CD8-positive, alpha-beta T cell (primary cell): ENCODE measurements at regions of chr5 and their contacts with region 1.

Region 1: GRCh38 chr5:132736853-132737833 is at the start of gene KIF3A:
- DNase-seq: peak; percentile 94 to 99 (median 99)
- ATAC-seq: peak; percentile 89
- H3K4me3 ChIP-seq: peak within 1 kb of the TSS; percentile 80 to 85
- H3K4me3 Mint-ChIP-seq: peak within 1 kb of the TSS; percentile 94
- H3K27ac ChIP-seq: peak within 1 kb of the TSS; percentile 83
- H3K27ac Mint-ChIP-seq: peak within 1 kb of the TSS; percentile 93
- H3K4me1 ChIP-seq: peaks cover 15% of the 10 kb centered on the region
- H3K4me1 Mint-ChIP-seq: peaks cover 30% of the 10 kb centered on the region
- H3K27me3 ChIP-seq: no peaks in the 10 kb centered on the region
- H3K27me3 Mint-ChIP-seq: no peaks in the 10 kb centered on the region
- CTCF ChIP-seq: peak; percentile 30
- total RNA-seq, gene KIF3A: 13.0 to 14.8 TPM

Region 2: DNA sequence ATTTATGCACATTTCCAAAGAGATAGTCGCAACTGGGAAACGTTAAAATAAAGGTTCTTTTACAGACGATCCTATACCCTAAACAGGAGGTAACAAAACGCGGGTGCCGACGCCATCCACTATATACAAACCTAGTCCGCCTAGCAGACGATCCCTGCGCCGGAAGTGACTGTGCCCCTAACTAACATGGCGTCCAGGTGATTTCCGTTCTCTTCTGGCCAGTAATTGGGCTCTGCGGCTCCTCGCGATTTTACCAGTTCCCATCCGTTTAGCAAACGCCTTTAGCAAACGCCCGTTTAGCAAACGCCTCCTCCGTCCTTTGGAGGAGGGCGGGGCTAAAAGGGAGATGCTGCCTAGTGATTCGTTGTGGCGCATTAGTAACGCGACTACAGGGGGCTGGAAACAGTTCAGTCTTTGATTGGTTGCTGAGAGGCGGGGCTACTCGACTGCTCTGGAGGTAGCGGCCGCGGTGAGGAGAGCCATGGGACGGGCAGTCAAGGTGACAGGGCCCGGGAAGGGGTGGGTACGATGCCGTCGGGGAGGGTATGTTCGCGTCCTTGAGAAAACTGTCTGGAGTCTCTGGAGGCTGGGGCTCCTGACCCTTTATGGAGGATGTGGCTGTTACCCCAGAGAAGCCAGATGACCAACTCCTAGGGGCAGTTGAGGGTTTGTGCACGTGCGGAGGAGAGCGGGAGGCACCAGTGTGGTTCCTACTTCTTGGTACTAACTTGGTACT is 1566.4 kb before region 1 on chr5 and contains the start of gene LYRM7:
- CTCF ChIA-PET with region 1: no interaction called
- POLR2A ChIA-PET with region 1: no interaction called
- intact Hi-C with region 1: loop called in 1 of 2 experiments (anchors 5 kb)
- DNase-seq: peak; percentile 89 to 99 (median 93)
- ATAC-seq: peak; percentile 95
- H3K4me3 ChIP-seq: peak within 1 kb of the TSS; percentile 64 to 76
- H3K4me3 Mint-ChIP-seq: peak within 1 kb of the TSS; percentile 100
- H3K27ac ChIP-seq: peak within 1 kb of the TSS; percentile 73 to 81
- H3K27ac Mint-ChIP-seq: peak within 1 kb of the TSS; percentile 99
- H3K4me1 ChIP-seq: peaks cover 22% of the 10 kb centered on the region
- H3K4me1 Mint-ChIP-seq: peaks cover 45% of the 10 kb centered on the region
- H3K27me3 ChIP-seq: no peaks in the 10 kb centered on the region
- H3K27me3 Mint-ChIP-seq: no peaks in the 10 kb centered on the region
- CTCF ChIP-seq: no peak
- total RNA-seq, gene LYRM7: 8.7 to 8.9 TPM

Region 3: DNA sequence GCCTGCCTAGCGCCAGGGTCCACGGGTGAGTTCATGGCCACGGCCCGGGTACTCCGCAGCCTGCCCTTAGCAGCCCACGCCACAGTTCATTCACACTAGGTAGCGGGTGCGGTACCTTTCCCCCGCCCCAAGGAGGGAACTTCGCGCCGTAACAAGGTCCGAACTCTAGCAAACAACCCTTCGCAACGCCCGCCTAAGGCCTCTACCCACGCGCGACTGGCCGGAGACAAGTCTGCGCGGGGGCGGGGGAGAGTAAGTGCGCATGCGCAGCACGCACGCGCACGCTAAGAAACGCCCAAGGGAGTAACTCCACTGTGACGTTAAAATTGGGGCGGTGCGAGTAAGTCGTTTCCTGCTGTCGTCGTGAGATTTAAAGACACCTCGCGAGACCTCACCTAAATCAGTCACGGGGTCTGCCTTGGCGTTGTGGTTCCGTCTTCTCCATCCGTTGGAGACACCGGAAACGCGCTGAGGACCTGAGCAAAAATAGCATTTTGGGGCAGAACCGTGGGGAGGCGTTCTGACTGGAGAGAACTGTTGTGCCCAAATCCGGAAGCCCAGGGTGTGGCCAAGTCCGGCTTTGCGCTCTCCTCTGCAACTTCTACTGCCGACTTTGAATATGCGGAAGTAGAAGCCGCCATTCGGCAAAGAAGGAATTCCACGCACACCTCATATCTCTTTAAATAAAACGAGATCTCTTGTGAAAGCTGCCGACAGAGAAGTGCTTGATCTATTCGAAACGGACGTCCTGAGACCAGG is 1102.0 kb before region 1 on chr5 and contains the start of gene RAPGEF6:
- CTCF ChIA-PET with region 1: no interaction called
- POLR2A ChIA-PET with region 1: no interaction called
- intact Hi-C with region 1: loop called in 1 of 2 experiments (anchors 5 kb)
- DNase-seq: peak; percentile 91 to 100 (median 95)
- ATAC-seq: peak; percentile 83
- H3K4me3 ChIP-seq: peak within 1 kb of the TSS; percentile 83
- H3K4me3 Mint-ChIP-seq: peak within 1 kb of the TSS; percentile 96
- H3K27ac ChIP-seq: peak within 1 kb of the TSS; percentile 94 to 98
- H3K27ac Mint-ChIP-seq: peak within 1 kb of the TSS; percentile 99
- H3K4me1 ChIP-seq: peaks cover 61% of the 10 kb centered on the region
- H3K4me1 Mint-ChIP-seq: peaks cover 34% of the 10 kb centered on the region
- H3K27me3 ChIP-seq: no peaks in the 10 kb centered on the region
- H3K27me3 Mint-ChIP-seq: no peaks in the 10 kb centered on the region
- CTCF ChIP-seq: no peak
- total RNA-seq, gene RAPGEF6: 64.3 to 71.7 TPM

Region 4: GRCh38 chr5:132556763-132557477 is 180.2 kb before region 1 on chr5 and contains the start of gene RAD50:
- CTCF ChIA-PET with region 1: no interaction called
- POLR2A ChIA-PET with region 1: interaction called, 4 read pairs
- intact Hi-C with region 1: loop called (anchors 2 to 5 kb)
- DNase-seq: peak; percentile 83 to 96 (median 91)
- ATAC-seq: peak; percentile 95
- H3K4me3 ChIP-seq: peak within 1 kb of the TSS; percentile 62 to 97
- H3K4me3 Mint-ChIP-seq: peak within 1 kb of the TSS; percentile 98
- H3K27ac ChIP-seq: peak within 1 kb of the TSS; percentile 68 to 91
- H3K27ac Mint-ChIP-seq: peak within 1 kb of the TSS; percentile 98
- H3K4me1 ChIP-seq: peaks cover 21% of the 10 kb centered on the region
- H3K4me1 Mint-ChIP-seq: peaks cover 28% of the 10 kb centered on the region
- H3K27me3 ChIP-seq: no peaks in the 10 kb centered on the region
- H3K27me3 Mint-ChIP-seq: no peaks in the 10 kb centered on the region
- CTCF ChIP-seq: no peak
- total RNA-seq, gene RAD50: 8.0 to 8.7 TPM

Region 5: DNA sequence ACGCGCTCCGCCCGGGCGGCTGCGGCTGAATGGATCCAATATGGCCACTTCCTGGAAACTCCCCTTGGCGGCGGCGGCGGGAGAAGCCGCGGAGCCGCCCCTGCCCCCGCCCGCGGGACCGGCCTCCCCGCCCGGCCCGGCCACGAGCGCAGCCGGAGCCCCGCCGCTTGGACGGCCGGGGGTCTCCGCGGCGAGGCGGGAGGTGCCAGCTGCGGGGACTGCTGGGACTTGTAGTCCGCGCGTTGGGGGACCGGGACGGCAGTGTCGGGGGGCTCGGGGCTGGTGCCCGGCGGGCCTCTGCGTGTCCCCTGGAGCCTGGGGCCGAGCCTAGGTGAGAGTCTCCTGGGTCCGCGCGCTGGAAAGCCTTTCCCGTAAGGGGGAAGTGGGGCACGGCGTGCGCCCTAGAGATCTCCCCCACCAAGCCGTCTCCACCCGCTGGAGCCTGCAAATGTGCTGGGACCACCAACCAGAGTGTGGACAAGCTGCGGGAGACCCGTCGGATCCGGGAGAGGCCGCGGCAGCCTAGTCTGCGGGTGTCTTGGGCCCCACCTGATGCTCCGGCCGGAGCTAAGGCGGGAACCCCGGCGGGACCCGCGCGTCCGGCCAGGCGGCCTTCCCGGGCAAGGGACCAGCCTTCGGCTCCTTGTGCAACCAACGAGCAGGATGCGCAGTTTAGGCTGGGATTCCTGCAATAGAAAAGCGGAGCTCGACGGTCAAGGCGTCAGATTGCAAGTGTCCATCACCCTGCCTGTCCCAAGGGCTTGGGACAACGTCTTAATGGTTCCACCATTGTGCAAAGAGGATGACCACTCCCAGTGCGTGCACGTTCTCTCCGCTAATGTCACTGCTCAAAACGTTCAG is 40.3 kb after region 1 on chr5 and contains the start of gene SEPTIN8:
- CTCF ChIA-PET with region 1: no interaction called
- POLR2A ChIA-PET with region 1: no interaction called
- intact Hi-C with region 1: loop called in 1 of 2 experiments (anchors 1 kb)
- DNase-seq: peak in 8 of 9 experiments; percentile 4 to 69 (median 32)
- ATAC-seq: peak; percentile 66
- H3K4me3 ChIP-seq: peak within 1 kb of the TSS; percentile 62 to 79
- H3K4me3 Mint-ChIP-seq: peak within 1 kb of the TSS; percentile 68
- H3K27ac ChIP-seq: no peak within 1 kb of the TSS
- H3K27ac Mint-ChIP-seq: no peak within 1 kb of the TSS
- H3K4me1 ChIP-seq: peaks cover 20% of the 10 kb centered on the region
- H3K4me1 Mint-ChIP-seq: peaks cover 33% of the 10 kb centered on the region
- H3K27me3 ChIP-seq: peaks cover 0 to 4% of the 10 kb centered on the region in 2 experiments
- H3K27me3 Mint-ChIP-seq: peaks cover 15% of the 10 kb centered on the region
- CTCF ChIP-seq: no peak
- total RNA-seq, gene SEPTIN8: 5.3 to 6.8 TPM

Region 6: GRCh38 chr5:132963175-132964104 is 226.3 kb after region 1 on chr5 and contains the start of gene AFF4:
- CTCF ChIA-PET with region 1: no interaction called
- POLR2A ChIA-PET with region 1: interaction called, 3 read pairs
- intact Hi-C with region 1: loop called in 1 of 2 experiments (anchors 5 kb)
- DNase-seq: peak; percentile 69 to 93 (median 84)
- ATAC-seq: peak; percentile 75
- H3K4me3 ChIP-seq: peak within 1 kb of the TSS; percentile 52 to 71
- H3K4me3 Mint-ChIP-seq: peak within 1 kb of the TSS; percentile 95
- H3K27ac ChIP-seq: peak within 1 kb of the TSS; percentile 84 to 92
- H3K27ac Mint-ChIP-seq: peak within 1 kb of the TSS; percentile 99
- H3K4me1 ChIP-seq: peaks cover 35% of the 10 kb centered on the region
- H3K4me1 Mint-ChIP-seq: peaks cover 43% of the 10 kb centered on the region
- H3K27me3 ChIP-seq: no peaks in the 10 kb centered on the region
- H3K27me3 Mint-ChIP-seq: no peaks in the 10 kb centered on the region
- CTCF ChIP-seq: no peak
- total RNA-seq, gene AFF4: 98.0 to 104 TPM

Region 7: DNA sequence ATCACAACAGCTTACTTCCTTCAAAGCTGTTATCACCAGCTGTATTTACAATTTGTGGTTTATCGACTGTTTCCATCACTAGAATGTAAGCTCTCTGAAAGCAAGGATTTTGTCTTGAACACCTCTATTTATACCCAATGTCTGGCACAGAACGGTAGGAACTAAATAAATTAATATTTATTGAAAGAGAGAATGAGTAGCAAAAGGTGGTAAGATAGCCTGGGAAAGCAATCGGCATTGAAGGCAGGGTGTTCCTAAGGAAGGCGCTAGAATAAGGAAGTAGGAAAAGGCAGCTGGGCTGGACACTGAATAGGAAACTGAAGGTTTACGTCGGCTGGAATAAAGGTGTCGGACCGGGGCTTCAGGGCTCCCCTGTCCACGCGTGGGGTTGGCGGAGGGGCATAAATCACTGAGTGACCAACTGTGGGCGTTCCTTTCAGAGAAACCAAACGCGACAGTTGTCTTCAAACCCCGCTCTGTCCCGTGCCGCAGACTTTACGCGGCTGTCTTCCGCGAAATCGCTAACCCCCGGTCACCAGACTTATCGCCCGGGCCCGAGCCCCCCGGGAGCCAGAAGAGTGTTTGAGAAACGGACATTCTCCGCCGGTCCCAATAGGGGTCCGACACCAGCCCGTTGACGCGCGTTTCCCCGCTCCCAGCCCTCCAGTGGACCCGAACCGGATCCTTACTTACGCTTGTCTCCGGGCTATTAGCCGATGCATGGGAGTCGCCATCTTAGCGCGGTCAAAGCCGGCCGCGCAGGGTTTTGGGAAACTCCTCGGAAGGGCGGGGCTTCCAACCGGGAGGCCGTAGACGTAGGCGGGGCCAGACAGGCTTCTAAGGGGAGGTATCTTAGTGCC is 288.9 kb after region 1 on chr5 and contains the start of gene ZCCHC10:
- CTCF ChIA-PET with region 1: no interaction called
- POLR2A ChIA-PET with region 1: no interaction called
- intact Hi-C with region 1: loop called in 1 of 2 experiments (anchors 10 kb)
- DNase-seq: peak; percentile 82 to 95 (median 92)
- ATAC-seq: peak; percentile 99
- H3K4me3 ChIP-seq: peak within 1 kb of the TSS; percentile 98 to 100
- H3K4me3 Mint-ChIP-seq: peak within 1 kb of the TSS; percentile 97
- H3K27ac ChIP-seq: peak within 1 kb of the TSS; percentile 86 to 95
- H3K27ac Mint-ChIP-seq: peak within 1 kb of the TSS; percentile 94
- H3K4me1 ChIP-seq: peaks cover 4% of the 10 kb centered on the region
- H3K4me1 Mint-ChIP-seq: peaks cover 25% of the 10 kb centered on the region
- H3K27me3 ChIP-seq: no peaks in the 10 kb centered on the region
- H3K27me3 Mint-ChIP-seq: no peaks in the 10 kb centered on the region
- CTCF ChIP-seq: no peak
- total RNA-seq, gene ZCCHC10: 22.3 to 22.7 TPM